HEK293 (cell line): ENCODE measurements at regions of chr22 and their contacts with region 1.

Region 1: DNA sequence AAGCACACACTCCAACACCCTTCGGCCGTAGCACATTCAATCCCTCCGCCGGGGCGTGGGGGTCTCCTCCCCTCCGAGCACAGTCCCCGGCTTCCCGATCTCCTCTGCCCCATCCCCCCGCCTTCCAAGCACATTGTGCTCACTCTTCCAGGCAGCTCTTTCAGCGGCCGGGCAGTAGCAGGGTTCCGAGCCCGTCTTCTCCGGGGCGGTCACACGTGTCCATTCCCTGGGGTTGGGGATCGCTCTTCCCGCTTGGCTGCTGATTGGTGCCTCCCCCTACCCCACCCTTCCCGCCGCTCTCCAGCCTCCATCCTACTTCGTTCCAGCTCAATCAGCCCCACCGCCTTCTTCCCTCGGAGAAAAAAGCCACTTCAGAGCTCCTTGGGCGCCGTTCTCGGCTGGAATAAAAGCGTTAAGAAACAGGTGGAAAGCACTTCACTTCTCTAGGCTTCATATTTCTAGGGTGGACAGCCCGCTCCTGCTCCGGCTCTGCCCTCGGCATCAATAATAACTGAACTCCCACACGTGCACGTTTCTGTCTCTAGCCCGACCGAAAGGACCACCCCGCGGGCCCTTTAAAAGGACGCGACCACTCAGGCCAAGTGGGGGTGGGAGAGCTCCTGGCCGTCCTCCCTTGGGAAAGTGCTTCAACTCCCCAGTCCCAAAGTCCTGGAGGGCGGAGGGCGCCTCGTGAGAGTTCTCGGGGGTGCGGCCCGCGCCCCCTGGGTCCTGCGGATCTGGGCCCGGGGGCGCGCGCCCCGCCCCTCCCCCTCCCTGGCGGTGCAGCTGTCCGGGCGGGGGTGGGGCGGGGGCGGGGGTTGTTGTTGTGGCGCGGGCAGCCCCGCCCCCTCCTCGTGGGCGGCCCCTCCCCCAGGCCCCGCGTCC is 464 bp upstream of the CECR2 start:
- H3K4me3 ChIP-seq: peak overlapping the region; percentile 92
- H3K27ac ChIP-seq: peak overlapping the region; percentile 93
- H3K4me1 ChIP-seq: peaks cover 3% of the 10 kb centered on the region
- CTCF ChIP-seq: no peak

Region 2: DNA sequence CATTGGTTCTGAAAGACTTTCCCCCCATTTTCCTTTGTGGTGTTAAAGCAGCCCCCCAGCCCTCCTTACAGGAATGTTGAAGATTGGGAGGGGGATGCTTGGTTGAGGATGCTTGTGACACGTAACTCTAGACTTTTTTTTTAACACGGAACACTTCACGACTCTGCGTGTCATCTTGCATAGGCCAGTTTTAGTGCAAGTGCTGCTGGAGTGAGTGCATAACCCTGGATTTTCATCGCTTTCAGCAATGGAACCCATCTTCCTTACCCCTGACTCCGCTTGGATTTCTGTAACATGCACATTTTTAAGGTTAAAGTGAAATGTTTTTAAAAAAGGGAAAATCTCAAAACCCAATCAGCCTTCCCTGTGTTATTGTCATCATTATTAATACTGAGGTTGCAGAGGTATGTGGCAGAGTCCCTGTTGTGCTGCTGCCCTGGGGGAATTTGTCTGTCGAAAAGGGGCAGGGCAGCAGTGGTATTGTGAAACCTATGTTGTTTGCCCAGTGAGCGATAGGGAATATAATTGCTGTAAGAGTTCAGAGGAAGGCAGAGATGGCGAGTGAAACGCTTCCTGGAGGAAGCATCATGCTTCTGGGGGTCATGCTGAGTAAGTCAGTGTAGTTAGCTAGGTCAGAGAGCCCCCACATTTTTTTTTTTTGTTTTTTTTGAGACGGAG is 12.6 kb after region 1 on chr22:
- CTCF ChIA-PET with region 1: interaction called, 4 read pairs
- POLR2A ChIA-PET with region 1: interaction called, 13 read pairs
- H3K4me3 ChIP-seq: no peak overlapping the region
- H3K27ac ChIP-seq: no peak overlapping the region
- H3K4me1 ChIP-seq: peaks cover 23% of the 10 kb centered on the region
- CTCF ChIP-seq: no peak